Esophagus squamous epithelium (tissue), 5 donors: ENCODE measurements at regions of chr9 and their contacts with region 1.

Region 1: DNA sequence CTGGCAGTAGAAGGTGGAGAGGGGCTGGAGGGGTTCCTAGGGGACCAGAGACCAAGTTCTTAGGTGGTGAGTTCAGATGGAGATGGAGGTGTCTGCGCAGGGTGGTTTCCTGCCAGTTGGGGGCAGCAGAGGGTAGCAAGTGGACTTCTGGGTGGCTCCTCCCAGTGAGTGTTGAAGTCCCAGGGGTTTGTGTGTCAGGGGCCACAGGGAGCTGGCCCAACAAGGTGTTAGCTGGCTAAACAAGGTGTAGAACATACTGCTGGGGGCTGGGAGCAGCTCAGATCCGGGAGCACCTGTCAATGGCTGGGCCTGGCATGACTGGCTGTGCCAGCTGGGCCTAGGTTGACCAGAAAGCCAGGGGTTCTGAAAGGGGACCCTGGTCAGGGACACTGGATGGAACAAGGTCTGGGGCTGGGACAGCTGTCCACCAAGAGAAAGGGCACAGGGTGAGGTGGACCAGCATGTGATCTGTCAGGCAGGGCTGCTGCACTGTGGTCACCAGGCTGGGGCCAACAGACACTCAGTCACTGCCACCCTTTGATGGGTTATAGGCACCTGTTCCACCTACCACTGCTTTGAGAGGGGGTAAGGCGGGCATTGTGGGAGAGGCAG is 35.6 kb downstream of the DAB2IP start:
- DNase-seq: no peak
- H3K4me3 ChIP-seq: no peak overlapping the region
- H3K27ac ChIP-seq: peak overlapping the region in 1 of 4 donors; percentile 34
- H3K4me1 ChIP-seq: peaks cover 0 to 33% (median 3%) of the 10 kb centered on the region in 3 donors
- H3K27me3 ChIP-seq: no peaks in the 10 kb centered on the region
- CTCF ChIP-seq: peak in 5 of 6 experiments; percentile 76 to 87 (median 81)
- POLR2A ChIP-seq: no peak

Region 2: DNA sequence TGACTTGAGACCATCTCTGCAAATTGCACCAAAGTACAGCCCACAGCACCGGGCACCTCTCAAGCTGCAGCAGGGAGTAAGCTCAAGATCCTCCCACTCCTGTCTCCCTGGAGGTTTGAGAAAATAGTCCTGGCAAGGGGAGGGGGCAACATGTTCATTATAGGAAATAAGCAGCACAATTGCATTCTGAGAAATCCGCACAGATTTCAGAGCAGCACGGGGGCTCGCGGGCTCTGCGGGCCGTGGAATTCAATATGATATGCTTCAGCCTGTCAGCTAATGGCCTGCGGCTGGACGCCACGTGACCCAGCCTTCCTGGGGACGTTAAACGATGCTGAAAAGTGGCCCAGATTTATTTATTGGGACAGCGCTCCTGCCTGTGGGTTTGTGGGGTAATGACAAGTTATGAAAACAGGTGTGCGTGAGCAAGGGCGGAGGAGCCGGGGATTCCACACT is 120.8 kb after region 1 on chr9:
- intact Hi-C with region 1: no loop called
- DNase-seq: no peak
- H3K4me3 ChIP-seq: no peak overlapping the region
- H3K27ac ChIP-seq: no peak overlapping the region
- H3K4me1 ChIP-seq: peaks cover 0 to 10% (median 0%) of the 10 kb centered on the region in 3 donors
- H3K27me3 ChIP-seq: no peaks in the 10 kb centered on the region
- CTCF ChIP-seq: no peak
- POLR2A ChIP-seq: no peak

Region 3: DNA sequence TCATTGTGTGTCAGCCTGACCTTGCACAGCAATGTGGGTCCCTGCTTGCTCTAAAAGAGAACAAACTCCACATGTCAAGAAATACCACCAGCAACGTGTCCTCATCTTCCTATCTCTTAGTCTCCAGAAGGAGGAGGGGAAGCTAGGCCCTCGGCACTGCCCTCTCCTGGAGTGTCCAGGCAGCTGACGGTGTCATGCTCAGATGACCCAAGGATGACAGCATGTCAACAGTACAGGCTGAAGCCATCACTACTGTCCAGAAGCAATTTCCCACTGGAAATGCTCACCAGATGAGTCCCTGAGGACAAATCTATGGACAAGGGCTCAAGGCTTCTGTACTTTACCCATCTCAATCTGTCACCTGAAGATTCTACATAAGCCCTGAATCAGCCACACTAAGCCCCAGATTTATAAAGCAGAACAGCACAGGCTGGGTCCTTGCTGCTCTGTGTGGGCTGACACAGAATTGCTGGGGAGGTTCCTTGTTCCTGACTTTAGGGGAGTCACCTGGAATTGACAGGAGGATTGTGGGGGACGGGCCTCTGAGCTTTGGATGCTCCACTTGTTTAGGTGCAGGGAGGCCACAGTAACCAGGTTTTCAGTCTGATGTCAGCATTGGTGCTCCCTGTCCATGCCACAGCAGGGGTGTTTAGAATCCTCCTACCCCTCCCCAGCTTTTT is 174.6 kb after region 1 on chr9:
- intact Hi-C with region 1: loop called (anchors 10 kb)
- DNase-seq: no peak
- H3K4me3 ChIP-seq: no peak overlapping the region
- H3K27ac ChIP-seq: peak overlapping the region in 1 of 4 donors; percentile 8
- H3K4me1 ChIP-seq: no peaks in the 10 kb centered on the region
- H3K27me3 ChIP-seq: no peaks in the 10 kb centered on the region
- CTCF ChIP-seq: peak in 3 of 6 experiments; percentile 22 to 48 (median 22)
- POLR2A ChIP-seq: no peak

Region 4: GRCh38 chr9:121992571-121993212 is 305.7 kb after region 1 on chr9:
- intact Hi-C with region 1: loop called (anchors 5 kb)
- DNase-seq: no peak
- H3K4me3 ChIP-seq: no peak overlapping the region
- H3K27ac ChIP-seq: no peak overlapping the region
- H3K4me1 ChIP-seq: peaks cover 0 to 9% (median 0%) of the 10 kb centered on the region in 3 donors
- H3K27me3 ChIP-seq: no peaks in the 10 kb centered on the region
- CTCF ChIP-seq: peak; percentile 80 to 90 (median 86)
- POLR2A ChIP-seq: no peak